ENCODE measurements at regions of chr7 and their contacts with region 1.

Region 1: GRCh38 chr7:95317546-95317945 is 6.8 kb downstream of the PON1 start:
- DNase-seq: no peak
- ATAC-seq: no peak
- H3K4me3 ChIP-seq: no peak overlapping the region
- H3K27ac ChIP-seq: no peak overlapping the region
- H3K4me1 ChIP-seq: no peaks in the 10 kb centered on the region
- H3K27me3 ChIP-seq: no peaks in the 10 kb centered on the region
- CTCF ChIP-seq: no peak

Region 2: DNA sequence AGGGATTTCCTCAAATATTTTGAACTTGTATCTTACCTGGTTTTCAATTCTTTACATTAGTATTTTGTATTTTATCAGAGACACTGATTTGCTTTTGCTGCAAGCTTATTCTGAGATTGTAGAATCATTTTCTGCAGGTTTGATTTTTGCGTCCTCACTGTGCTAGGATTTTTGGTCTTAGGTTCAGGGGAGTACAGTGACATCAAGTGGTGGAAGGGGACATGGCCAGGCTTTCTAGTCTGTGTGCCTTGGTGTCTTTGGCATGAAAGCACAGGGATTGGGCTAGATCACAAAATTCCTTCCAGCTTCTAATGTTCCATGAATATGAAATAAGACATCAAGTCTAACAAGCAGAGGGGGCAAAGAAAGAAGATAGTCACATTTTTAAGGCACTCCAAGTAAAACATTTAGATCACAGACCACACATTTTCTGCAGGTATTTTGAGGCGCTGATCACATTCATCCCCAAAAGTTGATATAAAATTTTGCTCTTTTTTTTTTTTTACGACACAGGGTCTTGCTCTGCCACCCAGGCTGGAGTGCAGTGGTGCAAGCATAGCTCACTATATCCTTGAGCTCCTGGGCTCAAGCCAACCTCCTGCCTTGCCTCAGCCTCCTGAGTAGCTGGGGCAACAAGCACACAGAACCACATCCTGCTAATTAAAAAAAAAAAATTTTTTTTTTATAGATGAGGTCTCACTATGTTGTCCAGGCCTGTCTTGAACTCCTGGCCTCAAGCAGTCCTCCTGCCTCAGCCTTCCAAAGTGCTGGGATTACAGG is 117.6 kb before region 1 on chr7:
- CTCF ChIA-PET with region 1: no interaction called
- POLR2A ChIA-PET with region 1: no interaction called
- intact Hi-C with region 1: no loop called
- DNase-seq: peak; percentile 60
- ATAC-seq: peak; percentile 87
- H3K4me3 ChIP-seq: no peak overlapping the region
- H3K27ac ChIP-seq: no peak overlapping the region
- H3K4me1 ChIP-seq: no peaks in the 10 kb centered on the region
- H3K27me3 ChIP-seq: no peaks in the 10 kb centered on the region
- CTCF ChIP-seq: peak; percentile 81

Region 3: GRCh38 chr7:95295399-95295798 is 22.1 kb before region 1 on chr7:
- CTCF ChIA-PET with region 1: no interaction called
- POLR2A ChIA-PET with region 1: no interaction called
- intact Hi-C with region 1: no loop called
- DNase-seq: no peak
- ATAC-seq: no peak
- H3K4me3 ChIP-seq: no peak overlapping the region
- H3K27ac ChIP-seq: no peak overlapping the region
- H3K4me1 ChIP-seq: 0 out of 2 replicates have a peak, but pooled peaks cover 7% of the 10 kb centered on the region
- H3K27me3 ChIP-seq: no peaks in the 10 kb centered on the region
- CTCF ChIP-seq: no peak

Region 4: DNA sequence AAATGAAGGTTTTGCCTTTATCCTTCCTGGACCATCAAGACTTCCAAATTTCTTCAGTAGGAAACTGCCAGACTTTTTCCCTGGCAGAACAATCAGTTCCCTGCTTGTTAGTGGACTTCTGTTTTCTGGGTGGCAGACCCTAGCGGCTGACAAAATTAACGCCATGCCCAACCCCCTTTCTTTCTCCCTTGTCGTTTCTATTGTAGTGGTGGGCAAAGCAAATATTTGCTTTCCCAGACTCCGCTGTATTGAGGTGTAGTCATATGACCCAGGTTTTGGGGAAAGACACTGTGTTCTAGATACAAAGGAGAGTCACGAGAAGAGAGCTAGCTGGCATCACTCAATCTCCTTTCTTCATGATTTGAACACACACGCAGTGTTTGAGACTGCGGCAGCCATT is 109.6 kb after region 1 on chr7:
- CTCF ChIA-PET with region 1: no interaction called
- POLR2A ChIA-PET with region 1: interaction called, 13 read pairs
- intact Hi-C with region 1: no loop called
- DNase-seq: no peak
- ATAC-seq: no peak
- H3K4me3 ChIP-seq: no peak overlapping the region
- H3K27ac ChIP-seq: no peak overlapping the region
- H3K4me1 ChIP-seq: peaks cover 8% of the 10 kb centered on the region; the same call in 1 of the 2 replicates
- H3K27me3 ChIP-seq: no peaks in the 10 kb centered on the region
- CTCF ChIP-seq: no peak

Region 5: DNA sequence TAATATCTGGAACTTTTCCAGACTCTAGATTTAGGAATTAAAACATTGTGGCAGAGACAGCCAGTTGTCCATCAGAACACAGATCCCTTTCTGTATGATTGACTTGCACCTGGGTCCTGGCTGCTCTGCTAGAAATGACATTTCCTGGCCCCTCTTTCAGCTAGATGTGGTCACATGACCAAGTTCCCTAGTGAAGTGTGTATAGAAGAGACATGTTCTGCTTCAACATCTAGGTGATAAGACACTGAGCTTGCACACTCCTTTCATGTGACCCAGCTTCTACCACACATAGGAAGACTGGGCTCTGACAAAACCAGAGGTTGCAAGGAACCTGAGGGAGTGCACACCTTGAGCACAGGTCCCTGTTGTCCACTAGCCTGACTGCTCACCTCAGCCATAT is 432.0 kb after region 1 on chr7:
- CTCF ChIA-PET with region 1: no interaction called
- POLR2A ChIA-PET with region 1: no interaction called
- intact Hi-C with region 1: no loop called
- DNase-seq: no peak
- ATAC-seq: no peak
- H3K4me3 ChIP-seq: no peak overlapping the region
- H3K27ac ChIP-seq: no peak overlapping the region
- H3K4me1 ChIP-seq: no peaks in the 10 kb centered on the region
- H3K27me3 ChIP-seq: peaks cover 38% of the 10 kb centered on the region
- CTCF ChIP-seq: no peak

Measured in PC-3 (cell line).